Esophagus muscularis mucosa (tissue), 4 donors: ENCODE measurements at regions of chr3 and their contacts with region 1.

Region 1: DNA sequence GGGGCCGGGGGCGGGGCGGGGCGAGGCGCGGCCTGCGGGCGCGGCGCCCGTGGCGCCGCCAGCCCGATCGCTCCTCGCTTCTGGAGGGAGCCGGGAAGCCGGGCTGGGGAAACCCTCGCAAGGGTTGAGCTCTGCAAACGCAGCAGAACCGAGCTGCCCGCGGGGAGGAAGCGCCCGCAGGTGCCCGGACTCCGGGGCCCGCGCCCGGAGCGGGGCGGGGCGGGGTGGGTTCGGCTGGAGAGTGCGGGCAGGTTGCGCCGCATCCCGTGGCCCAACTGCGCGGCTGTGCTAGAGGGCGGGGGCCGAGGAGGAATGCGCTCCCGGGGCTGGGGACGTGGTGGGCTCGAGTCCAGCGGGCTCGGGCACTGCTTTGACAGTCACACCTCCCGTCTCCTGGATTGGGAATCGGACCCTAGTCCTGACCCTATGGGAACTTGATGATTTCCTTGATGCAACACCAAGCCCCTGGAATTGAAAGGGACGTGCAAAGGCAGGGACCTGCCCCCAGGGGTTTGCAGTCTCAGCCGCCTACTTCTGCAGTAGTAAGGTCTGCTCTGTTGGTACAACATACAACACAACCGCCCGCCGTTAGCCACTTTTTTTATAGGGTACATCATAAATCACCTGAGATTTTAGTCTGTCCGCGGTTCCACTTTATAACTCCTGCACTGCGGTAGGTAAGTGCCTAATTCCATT is 34.3 kb downstream of the ZBTB38 start:
- DNase-seq: no peak
- H3K4me3 ChIP-seq: peak overlapping the region; percentile 81 to 91 (median 85)
- H3K27ac ChIP-seq: peak overlapping the region; percentile 98 to 100 (median 99)
- H3K4me1 ChIP-seq: peaks cover 59 to 79% (median 76%) of the 10 kb centered on the region in 4 donors
- H3K27me3 ChIP-seq: no peaks in the 10 kb centered on the region
- CTCF ChIP-seq: peak in 2 of 3 experiments; percentile 11 to 16
- EP300 ChIP-seq: no peak
- POLR2A ChIP-seq: no peak

Region 2: GRCh38 chr3:141368062-141368924 is 34.3 kb before region 1 on chr3 and contains the start of gene ZBTB38:
- intact Hi-C with region 1: loop called (anchors 5 kb)
- DNase-seq: peak; percentile 93
- H3K4me3 ChIP-seq: peak within 1 kb of the TSS; percentile 30 to 41 (median 37)
- H3K27ac ChIP-seq: peak within 1 kb of the TSS; percentile 84 to 88 (median 85)
- H3K4me1 ChIP-seq: peaks cover 28 to 48% (median 44%) of the 10 kb centered on the region in 4 donors
- H3K27me3 ChIP-seq: no peaks in the 10 kb centered on the region
- CTCF ChIP-seq: no peak
- EP300 ChIP-seq: no peak
- POLR2A ChIP-seq: no peak
- total RNA-seq, gene ZBTB38: 163 to 250 (median 203) TPM

Region 3: GRCh38 chr3:141477224-141477623 is 74.6 kb after region 1 on chr3:
- intact Hi-C with region 1: no loop called
- DNase-seq: no peak
- H3K4me3 ChIP-seq: no peak overlapping the region
- H3K27ac ChIP-seq: no peak overlapping the region
- H3K4me1 ChIP-seq: no peaks in the 10 kb centered on the region
- H3K27me3 ChIP-seq: no peaks in the 10 kb centered on the region
- CTCF ChIP-seq: no peak
- EP300 ChIP-seq: no peak
- POLR2A ChIP-seq: no peak